ENCODE measurements at regions of chr20 and their contacts with region 1.

Region 1: GRCh38 chr20:13546497-13547131 is 92.1 kb downstream of the TASP1 start:
- DNase-seq: no peak
- H3K4me3 ChIP-seq: no peak overlapping the region
- CTCF ChIP-seq: peak; percentile 75

Region 2: DNA sequence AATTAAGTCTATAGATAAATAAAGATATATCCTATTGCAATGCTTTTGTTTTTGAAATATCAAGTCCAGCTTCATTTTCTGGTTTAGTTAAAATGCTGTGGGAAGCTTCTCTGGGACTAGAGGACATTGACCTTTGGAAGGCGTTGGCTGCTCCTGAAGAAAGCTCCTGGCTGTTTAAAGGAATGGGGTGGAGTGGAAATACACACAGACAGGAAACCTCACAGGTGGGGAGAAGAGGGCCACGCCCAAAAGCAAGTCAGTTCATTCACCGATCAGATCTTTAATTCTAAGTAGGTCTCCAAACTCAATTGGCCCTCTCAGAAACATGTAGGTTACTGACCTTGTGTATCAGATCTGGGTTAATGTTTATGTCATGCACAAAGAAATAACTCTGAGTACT is 478.3 kb before region 1 on chr20:
- CTCF ChIA-PET with region 1: no interaction called
- POLR2A ChIA-PET with region 1: no interaction called
- DNase-seq: no peak
- H3K4me3 ChIP-seq: no peak overlapping the region
- CTCF ChIP-seq: no peak

Region 3: GRCh38 chr20:13302647-13303450 is 243.8 kb before region 1 on chr20:
- CTCF ChIA-PET with region 1: interaction called, 10 read pairs
- POLR2A ChIA-PET with region 1: no interaction called
- DNase-seq: no peak
- H3K4me3 ChIP-seq: no peak overlapping the region
- CTCF ChIP-seq: peak; percentile 62

Region 4: DNA sequence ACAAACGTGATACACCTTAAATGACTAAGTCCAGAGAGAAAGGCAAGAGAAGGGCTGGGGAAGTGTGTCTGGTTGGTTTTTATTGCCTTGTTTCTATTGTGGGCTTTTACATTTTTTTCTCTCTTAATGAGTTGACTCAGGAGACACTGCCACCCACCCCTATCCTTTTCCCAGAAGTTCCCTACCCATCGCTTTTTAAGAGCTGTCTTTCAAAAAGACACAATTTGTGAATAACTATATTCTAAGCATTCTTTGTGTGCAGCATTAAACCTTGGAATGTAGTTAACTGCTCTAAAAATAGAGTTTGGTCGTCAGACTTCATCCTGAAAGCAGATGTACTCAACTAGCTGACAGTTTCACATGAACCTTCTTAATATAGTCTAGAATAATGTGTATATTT is 150.6 kb before region 1 on chr20:
- CTCF ChIA-PET with region 1: interaction called, 19 read pairs
- POLR2A ChIA-PET with region 1: no interaction called
- DNase-seq: peak; percentile 75
- H3K4me3 ChIP-seq: no peak overlapping the region
- CTCF ChIP-seq: no peak

Region 5: GRCh38 chr20:13468166-13468565 is 78.4 kb before region 1 on chr20:
- CTCF ChIA-PET with region 1: interaction called, 14 read pairs
- POLR2A ChIA-PET with region 1: no interaction called
- DNase-seq: no peak
- H3K4me3 ChIP-seq: no peak overlapping the region
- CTCF ChIP-seq: no peak

Region 6: DNA sequence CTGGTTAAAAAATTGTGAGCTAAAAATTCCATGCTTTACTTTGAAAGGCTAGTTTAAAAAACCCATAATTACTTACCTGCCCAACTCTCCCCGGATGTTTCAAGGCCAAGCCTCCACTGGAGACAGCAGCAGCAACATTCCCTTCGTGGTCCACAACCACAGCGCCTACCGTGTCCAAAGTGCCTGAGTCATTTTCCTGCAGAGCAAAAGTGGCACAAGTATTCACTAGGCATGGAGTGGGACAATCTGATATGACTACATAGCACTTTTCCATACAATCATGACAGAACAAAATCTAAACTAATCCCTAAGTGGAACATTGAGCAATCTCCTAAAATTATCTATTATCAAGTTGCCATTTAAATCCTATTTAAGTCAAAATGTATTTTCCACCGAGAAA is 12.7 kb before region 1 on chr20:
- CTCF ChIA-PET with region 1: interaction called, 36 read pairs
- POLR2A ChIA-PET with region 1: interaction called, 3 read pairs
- DNase-seq: no peak
- H3K4me3 ChIP-seq: no peak overlapping the region
- CTCF ChIP-seq: no peak

Measured in AG04449 (cell line).